ENCODE measurements at regions of chr19 and their contacts with region 1.

Region 1: DNA sequence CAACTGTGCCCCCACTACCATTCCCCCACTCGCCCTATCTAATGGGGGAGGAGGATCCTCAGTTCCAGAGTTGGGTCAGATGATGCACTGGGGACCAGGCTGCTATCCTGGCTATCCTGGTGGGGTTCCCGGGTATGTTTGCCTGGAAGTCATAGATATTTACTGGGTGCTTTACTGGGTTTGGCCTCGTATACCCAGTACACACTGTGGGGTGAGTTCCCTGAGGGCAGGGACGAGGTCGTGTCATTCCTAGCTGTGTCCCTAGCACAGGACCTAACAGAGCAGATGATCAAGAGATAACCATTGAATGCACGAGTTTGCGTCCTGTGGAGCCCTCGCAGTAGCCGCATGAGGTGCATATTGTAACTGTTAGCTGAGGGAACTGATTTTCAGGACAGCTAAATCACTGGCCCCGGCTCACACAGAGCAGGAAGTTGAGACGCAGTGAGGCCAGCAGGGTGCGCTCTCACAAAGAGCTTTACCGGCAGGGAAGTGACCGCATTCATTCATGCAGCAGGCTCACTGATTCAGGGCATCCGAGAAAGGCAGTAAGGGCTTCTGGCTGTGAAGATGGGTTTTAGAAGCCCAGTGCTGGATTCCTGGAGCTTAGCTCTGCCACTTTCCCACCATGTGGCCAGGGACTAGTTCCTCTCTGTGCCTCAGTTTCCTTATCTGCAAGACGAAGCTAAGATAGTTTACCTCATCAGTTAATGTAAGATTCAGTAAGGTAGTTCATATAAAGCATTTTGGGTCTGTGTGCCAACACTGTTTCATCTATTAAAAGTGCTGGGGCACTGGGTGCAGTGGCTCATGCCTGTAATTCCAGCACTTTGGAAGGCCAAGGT is 6.0 kb downstream of the RUVBL2 start:
- H3K4me3 ChIP-seq: no peak overlapping the region
- H3K27ac ChIP-seq: no peak overlapping the region
- H3K4me1 ChIP-seq: 0 out of 2 replicates have a peak, but pooled peaks cover 3% of the 10 kb centered on the region
- CTCF ChIP-seq: peak; percentile 59; the same call in 1 of the 2 replicates

Region 2: DNA sequence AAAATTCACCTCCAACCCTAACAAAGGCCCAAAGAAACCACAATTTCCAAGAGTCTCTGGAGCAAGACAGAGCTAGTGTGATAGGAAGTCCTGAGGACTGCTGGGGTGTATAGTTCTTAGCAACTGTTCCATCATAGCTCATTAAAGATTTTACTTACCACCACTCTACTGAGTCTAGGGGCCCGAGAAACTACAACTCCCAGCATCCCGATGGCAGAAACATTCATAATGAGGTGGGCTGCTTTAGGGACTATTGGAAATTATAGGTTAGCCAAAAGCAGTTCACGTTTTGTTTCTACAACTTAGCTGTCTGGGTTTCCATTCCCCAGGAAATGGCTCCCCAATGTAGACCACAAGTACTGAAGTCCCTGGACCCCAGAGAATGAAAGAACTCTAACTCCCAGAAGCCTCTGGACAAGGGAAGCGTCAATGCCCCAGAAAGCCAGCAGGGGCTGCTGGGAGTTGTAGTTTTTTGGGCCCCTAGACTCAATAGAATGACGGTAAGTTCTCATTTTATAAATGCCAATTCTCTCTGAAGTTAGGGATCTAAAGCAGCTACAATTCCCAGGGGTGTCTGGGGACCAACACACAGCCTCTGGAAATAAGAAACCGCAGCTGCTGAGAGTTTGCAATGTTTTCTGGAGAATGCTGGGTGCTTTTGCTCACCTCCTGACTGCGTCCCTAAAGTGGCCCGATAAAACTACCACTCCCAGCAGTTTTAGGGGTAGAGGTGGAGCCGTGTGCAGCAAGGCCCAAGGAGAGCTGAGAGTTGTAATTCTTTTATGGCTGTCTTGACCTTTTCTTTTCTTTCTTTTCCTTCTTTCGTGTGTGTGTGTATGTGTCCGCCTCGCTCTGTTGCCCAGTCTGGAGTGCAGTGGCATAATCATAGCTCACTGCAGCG is 23.5 kb before region 1 on chr19:
- CTCF ChIA-PET with region 1: interaction called, 16 read pairs
- POLR2A ChIA-PET with region 1: interaction called, 3 read pairs
- H3K4me3 ChIP-seq: no peak overlapping the region
- H3K27ac ChIP-seq: no peak overlapping the region
- H3K4me1 ChIP-seq: no peaks in the 10 kb centered on the region
- CTCF ChIP-seq: no peak

Region 3: GRCh38 chr19:48982280-48982679 is 17.4 kb before region 1 on chr19:
- CTCF ChIA-PET with region 1: interaction called, 17 read pairs
- POLR2A ChIA-PET with region 1: interaction called, 3 read pairs
- H3K4me3 ChIP-seq: no peak overlapping the region
- H3K27ac ChIP-seq: no peak overlapping the region
- H3K4me1 ChIP-seq: no peaks in the 10 kb centered on the region
- CTCF ChIP-seq: no peak

Region 4: GRCh38 chr19:49017666-49018351 is 18.1 kb after region 1 on chr19:
- CTCF ChIA-PET with region 1: interaction called, 133 read pairs
- POLR2A ChIA-PET with region 1: interaction called, 4 read pairs
- H3K4me3 ChIP-seq: peak overlapping the region; percentile 24
- H3K27ac ChIP-seq: no peak overlapping the region; the same call in 1 of the 2 replicates
- H3K4me1 ChIP-seq: peaks cover 8% of the 10 kb centered on the region
- CTCF ChIP-seq: no peak; the same call in 1 of the 2 replicates

Region 5: DNA sequence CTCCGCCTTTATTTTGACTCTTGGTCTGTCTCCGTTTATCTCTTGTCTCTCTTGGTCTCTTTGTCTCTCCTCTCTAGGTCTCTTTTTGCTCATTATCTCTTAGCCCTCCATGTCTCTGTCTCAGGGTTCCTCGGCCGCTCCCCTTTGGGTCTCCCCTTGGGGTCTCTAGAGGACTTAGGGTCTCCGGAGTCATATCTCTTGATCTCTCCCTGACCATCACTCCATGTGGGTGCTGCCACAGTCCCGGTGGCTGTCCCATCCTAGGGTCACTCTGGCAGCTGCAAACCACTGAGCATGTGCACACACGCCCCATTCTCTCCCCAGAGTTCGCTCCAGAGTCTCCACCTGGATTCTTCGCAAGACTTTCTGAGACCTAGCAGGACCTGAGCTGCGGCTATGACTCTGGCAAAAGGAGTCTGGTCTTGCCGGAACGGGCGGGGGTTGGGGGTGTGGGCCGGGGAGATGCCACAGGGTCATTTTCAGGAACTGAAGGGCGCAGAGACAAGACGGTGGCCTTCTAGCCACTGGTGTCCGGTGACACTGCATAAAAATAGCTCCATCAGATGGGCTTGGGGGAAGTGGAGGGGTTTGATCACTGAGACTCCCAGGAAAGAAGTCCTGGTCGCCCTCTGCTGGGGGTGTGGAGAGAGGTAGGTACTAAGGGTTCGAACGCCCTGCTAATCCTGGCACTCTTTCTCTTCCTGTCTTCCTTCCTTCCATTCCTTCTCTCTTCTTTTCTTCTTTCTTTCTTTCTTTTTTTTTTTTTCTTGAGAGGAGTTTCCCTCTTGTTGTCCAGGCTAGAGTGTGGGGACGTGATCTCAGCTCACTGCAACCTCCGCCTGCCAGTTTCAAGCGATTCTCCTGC is 74.0 kb after region 1 on chr19:
- CTCF ChIA-PET with region 1: interaction called, 88 read pairs
- POLR2A ChIA-PET with region 1: no interaction called
- H3K4me3 ChIP-seq: no peak overlapping the region
- H3K27ac ChIP-seq: no peak overlapping the region
- H3K4me1 ChIP-seq: no peaks in the 10 kb centered on the region
- CTCF ChIP-seq: peak; percentile 66

Region 6: GRCh38 chr19:49097455-49098288 is 98.0 kb after region 1 on chr19:
- CTCF ChIA-PET with region 1: interaction called, 11 read pairs
- POLR2A ChIA-PET with region 1: interaction called, 4 read pairs
- H3K4me3 ChIP-seq: no peak overlapping the region
- H3K27ac ChIP-seq: peak overlapping the region; percentile 48
- H3K4me1 ChIP-seq: peaks cover 8% of the 10 kb centered on the region
- CTCF ChIP-seq: peak; percentile 94

Region 7: DNA sequence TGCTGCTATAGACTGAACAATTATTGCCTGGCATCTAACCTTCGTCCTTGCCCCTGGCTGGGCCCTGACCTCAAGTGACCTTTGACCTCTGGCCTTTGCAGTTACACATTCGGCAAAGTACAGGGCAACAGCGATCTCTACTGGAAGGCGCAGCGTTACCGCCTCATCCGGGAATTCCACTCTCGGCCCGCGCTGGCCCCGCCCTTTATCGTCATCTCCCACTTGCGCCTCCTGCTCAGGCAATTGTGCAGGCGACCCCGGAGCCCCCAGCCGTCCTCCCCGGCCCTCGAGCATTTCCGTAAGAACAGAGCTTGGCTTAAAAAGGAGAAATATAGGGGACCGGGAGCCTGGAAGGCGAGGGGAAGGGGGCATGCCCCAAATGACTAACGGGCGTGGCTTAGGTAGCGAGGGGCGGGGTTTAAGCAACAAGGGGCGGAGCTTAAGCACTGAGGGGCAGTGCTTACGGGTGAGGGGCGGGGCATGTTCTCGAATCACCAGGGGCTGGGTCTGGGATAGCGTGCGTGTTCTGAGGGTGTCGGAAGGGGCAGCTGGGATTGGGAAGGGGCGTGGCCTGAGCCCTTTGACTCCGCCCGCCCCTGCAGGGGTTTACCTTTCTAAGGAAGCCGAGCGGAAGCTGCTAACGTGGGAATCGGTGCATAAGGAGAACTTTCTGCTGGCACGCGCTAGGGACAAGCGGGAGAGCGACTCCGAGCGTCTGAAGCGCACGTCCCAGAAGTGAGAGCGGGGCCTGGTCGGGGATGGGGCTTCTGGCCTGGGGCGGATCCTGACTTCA is 210.6 kb after region 1 on chr19:
- CTCF ChIA-PET with region 1: interaction called, 12 read pairs
- POLR2A ChIA-PET with region 1: no interaction called
- H3K4me3 ChIP-seq: no peak overlapping the region
- H3K27ac ChIP-seq: no peak overlapping the region
- H3K4me1 ChIP-seq: peaks cover 6% of the 10 kb centered on the region; the same call in 1 of the 2 replicates
- CTCF ChIP-seq: no peak

Region 8: GRCh38 chr19:49374665-49375434 is 375.1 kb after region 1 on chr19:
- CTCF ChIA-PET with region 1: no interaction called
- POLR2A ChIA-PET with region 1: no interaction called
- H3K4me3 ChIP-seq: no peak overlapping the region
- H3K27ac ChIP-seq: no peak overlapping the region
- H3K4me1 ChIP-seq: no peaks in the 10 kb centered on the region
- CTCF ChIP-seq: no peak